ENCODE measurements at regions of chr3 and their contacts with region 1.

Region 1: GRCh38 chr3:32733631-32734229 is 48.7 kb downstream of the CNOT10 start:
- DNase-seq: no peak
- H3K4me3 ChIP-seq: no peak overlapping the region
- H3K27ac ChIP-seq: no peak overlapping the region
- H3K4me1 ChIP-seq: no peaks in the 10 kb centered on the region
- H3K27me3 ChIP-seq: no peaks in the 10 kb centered on the region
- CTCF ChIP-seq: peak; percentile 55 to 63

Region 2: DNA sequence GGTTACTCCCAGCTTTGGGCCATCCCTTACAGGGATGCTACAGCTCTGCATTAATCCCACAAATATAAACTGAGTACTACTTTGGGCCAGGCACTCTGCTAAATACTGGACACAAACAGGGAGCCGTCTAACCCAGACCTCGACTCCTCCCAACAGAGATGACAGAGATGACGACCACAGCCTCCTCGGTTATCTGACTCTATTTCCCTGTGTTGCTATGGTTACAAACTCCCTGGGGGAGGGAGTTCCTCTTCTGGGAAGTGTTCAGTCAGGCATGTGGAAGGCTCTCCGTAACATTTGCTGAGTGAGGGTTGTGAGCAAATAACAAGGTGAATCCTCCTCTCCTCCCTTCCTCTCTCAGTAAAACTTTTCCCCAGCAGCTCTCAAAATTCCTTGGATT is 348.8 kb before region 1 on chr3:
- CTCF ChIA-PET with region 1: no interaction called
- dilution Hi-C with region 1: no loop called
- in situ Hi-C with region 1: no loop called
- intact Hi-C with region 1: no loop called
- DNase-seq: no peak
- H3K4me3 ChIP-seq: no peak overlapping the region
- H3K27ac ChIP-seq: no peak overlapping the region
- H3K4me1 ChIP-seq: peaks cover 4% of the 10 kb centered on the region
- H3K27me3 ChIP-seq: no peaks in the 10 kb centered on the region
- CTCF ChIP-seq: no peak

Region 3: DNA sequence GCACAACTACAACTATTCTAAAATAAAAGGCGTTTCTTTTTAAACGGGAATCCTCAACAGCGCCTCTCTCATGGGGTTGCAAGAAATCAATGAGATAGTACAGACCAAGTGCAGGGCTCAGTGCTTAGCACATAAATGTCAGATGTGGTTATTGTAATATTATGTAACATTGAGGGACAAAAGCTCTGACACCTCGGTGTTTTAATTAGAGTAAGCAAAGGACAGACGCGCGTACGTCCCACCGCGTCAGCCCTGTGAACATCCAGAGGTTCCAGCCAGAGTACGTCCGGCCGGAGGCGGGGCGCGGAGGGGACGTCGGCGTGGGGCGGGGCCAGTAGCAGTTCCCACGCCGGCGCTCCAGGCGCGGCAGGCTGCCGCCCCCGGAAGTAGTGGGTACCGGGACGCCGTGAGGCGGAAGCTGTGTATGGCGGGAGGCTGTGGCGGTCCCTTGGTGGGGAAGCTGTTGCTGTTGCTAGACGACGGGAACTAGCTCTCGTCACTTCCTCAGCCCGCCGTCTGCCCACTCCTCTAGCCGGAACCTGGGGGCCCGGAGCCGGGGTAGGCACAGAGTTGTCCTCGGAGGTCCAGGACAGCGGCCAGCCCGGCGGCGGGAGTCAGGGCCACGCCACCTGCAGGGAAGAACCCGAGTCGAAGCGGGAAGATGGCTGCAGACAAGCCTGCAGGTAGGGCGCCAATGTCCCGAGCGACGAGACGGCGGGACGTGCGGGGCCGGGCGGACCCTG is 48.8 kb before region 1 on chr3 and contains the start of gene CNOT10:
- CTCF ChIA-PET with region 1: no interaction called
- dilution Hi-C with region 1: no loop called
- in situ Hi-C with region 1: no loop called
- intact Hi-C with region 1: no loop called
- DNase-seq: peak; percentile 93
- H3K4me3 ChIP-seq: peak within 1 kb of the TSS; percentile 73 to 94 (median 82)
- H3K27ac ChIP-seq: peak within 1 kb of the TSS; percentile 66
- H3K4me1 ChIP-seq: peaks cover 14% of the 10 kb centered on the region
- H3K27me3 ChIP-seq: no peaks in the 10 kb centered on the region
- CTCF ChIP-seq: peak in 1 of 2 donors; percentile 35
- total RNA-seq, gene CNOT10: 21.3 to 31.6 TPM

Region 4: GRCh38 chr3:32903953-32904352 is 170.2 kb after region 1 on chr3:
- CTCF ChIA-PET with region 1: no interaction called
- dilution Hi-C with region 1: no loop called
- in situ Hi-C with region 1: no loop called
- intact Hi-C with region 1: loop called (anchors 1 kb)
- DNase-seq: no peak
- H3K4me3 ChIP-seq: no peak overlapping the region
- H3K27ac ChIP-seq: no peak overlapping the region
- H3K4me1 ChIP-seq: no peaks in the 10 kb centered on the region
- H3K27me3 ChIP-seq: no peaks in the 10 kb centered on the region
- CTCF ChIP-seq: no peak

Measured in mammary epithelial cell (primary cell).